Activated CD8-positive, alpha-beta T cell treated with anti-CD3 and anti-CD28 coated beads for 36 hours (primary cell): ENCODE measurements at regions of chr20 and their contacts with region 1.

Region 1: DNA sequence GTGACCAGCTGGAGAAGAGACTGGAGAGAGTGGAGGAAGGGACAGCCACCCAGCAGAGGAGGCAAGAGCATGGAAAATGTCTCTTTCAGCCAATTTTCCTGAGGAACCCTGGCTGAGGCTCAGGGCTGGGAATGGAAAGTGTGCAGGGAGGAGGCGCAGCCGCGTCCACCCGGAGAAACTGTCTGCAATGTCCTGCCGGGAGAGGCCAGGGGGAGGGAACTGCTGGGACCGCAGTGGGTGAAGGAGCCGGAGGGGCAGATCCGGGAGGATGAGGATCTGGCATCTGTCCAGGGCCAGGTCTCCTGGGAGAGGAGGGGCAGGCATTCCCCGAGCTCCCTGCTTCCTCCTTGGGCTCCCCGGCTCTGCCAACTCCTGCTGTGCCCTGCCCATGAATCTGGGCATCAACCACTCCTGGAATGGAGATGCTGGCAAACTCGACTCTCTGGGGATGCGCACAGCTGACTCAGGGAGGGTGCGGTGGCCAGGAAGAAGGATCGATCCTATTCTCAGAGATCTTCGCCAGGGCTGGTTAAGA is 17.4 kb upstream of the HM13 start:
- DNase-seq: no peak
- ATAC-seq: no peak
- H3K4me3 Mint-ChIP-seq: no peak overlapping the region
- H3K27ac Mint-ChIP-seq: no peak overlapping the region
- H3K4me1 Mint-ChIP-seq: no peaks in the 10 kb centered on the region
- H3K27me3 Mint-ChIP-seq: peaks cover 14% of the 10 kb centered on the region
- CTCF ChIP-seq: no peak

Region 2: GRCh38 chr20:31414380-31414779 is 82.4 kb before region 1 on chr20:
- CTCF ChIA-PET with region 1: interaction called, 30 read pairs
- POLR2A ChIA-PET with region 1: no interaction called
- intact Hi-C with region 1: no loop called
- DNase-seq: no peak
- ATAC-seq: no peak
- H3K4me3 Mint-ChIP-seq: no peak overlapping the region
- H3K27ac Mint-ChIP-seq: no peak overlapping the region
- H3K4me1 Mint-ChIP-seq: no peaks in the 10 kb centered on the region
- H3K27me3 Mint-ChIP-seq: peaks cover 4% of the 10 kb centered on the region
- CTCF ChIP-seq: no peak

Region 3: GRCh38 chr20:31440012-31441002 is 56.5 kb before region 1 on chr20 and contains the start of gene DEFB123:
- CTCF ChIA-PET with region 1: interaction called, 24 read pairs
- POLR2A ChIA-PET with region 1: no interaction called
- intact Hi-C with region 1: no loop called
- DNase-seq: peak; percentile 15
- ATAC-seq: no peak
- H3K4me3 Mint-ChIP-seq: no peak within 1 kb of the TSS
- H3K27ac Mint-ChIP-seq: no peak within 1 kb of the TSS
- H3K4me1 Mint-ChIP-seq: no peaks in the 10 kb centered on the region
- H3K27me3 Mint-ChIP-seq: no peaks in the 10 kb centered on the region
- CTCF ChIP-seq: peak; percentile 51
- total RNA-seq, gene DEFB123: not detected

Region 4: DNA sequence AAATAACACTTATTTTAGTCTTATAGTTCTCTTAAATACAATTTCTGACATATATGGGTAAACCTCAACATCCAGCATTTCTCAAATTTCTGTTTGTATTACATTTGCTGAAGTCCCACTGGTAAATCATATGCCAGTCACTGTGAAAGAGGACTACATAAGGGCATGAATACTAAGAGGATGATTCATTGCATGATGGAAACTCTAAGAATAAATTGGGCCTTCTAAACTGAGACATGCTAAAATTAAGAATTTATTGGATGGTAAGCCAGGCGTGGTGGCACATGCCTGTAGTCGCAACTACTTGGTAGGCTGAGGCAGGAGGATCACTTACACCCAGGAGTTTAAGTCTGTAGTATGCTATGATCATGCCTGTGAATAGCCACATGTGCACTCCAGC is 44.3 kb before region 1 on chr20:
- CTCF ChIA-PET with region 1: interaction called, 129 read pairs
- POLR2A ChIA-PET with region 1: no interaction called
- intact Hi-C with region 1: no loop called
- DNase-seq: no peak
- ATAC-seq: no peak
- H3K4me3 Mint-ChIP-seq: no peak overlapping the region
- H3K27ac Mint-ChIP-seq: no peak overlapping the region
- H3K4me1 Mint-ChIP-seq: no peaks in the 10 kb centered on the region
- H3K27me3 Mint-ChIP-seq: peaks cover 8% of the 10 kb centered on the region
- CTCF ChIP-seq: no peak

Region 5: GRCh38 chr20:31485450-31486339 is 11.1 kb before region 1 on chr20:
- CTCF ChIA-PET with region 1: interaction called, 57 read pairs
- POLR2A ChIA-PET with region 1: no interaction called
- intact Hi-C with region 1: no loop called
- DNase-seq: peak; percentile 15
- ATAC-seq: peak; percentile 24
- H3K4me3 Mint-ChIP-seq: no peak overlapping the region
- H3K27ac Mint-ChIP-seq: no peak overlapping the region
- H3K4me1 Mint-ChIP-seq: peaks cover 19% of the 10 kb centered on the region
- H3K27me3 Mint-ChIP-seq: peaks cover 30% of the 10 kb centered on the region
- CTCF ChIP-seq: no peak

Region 6: DNA sequence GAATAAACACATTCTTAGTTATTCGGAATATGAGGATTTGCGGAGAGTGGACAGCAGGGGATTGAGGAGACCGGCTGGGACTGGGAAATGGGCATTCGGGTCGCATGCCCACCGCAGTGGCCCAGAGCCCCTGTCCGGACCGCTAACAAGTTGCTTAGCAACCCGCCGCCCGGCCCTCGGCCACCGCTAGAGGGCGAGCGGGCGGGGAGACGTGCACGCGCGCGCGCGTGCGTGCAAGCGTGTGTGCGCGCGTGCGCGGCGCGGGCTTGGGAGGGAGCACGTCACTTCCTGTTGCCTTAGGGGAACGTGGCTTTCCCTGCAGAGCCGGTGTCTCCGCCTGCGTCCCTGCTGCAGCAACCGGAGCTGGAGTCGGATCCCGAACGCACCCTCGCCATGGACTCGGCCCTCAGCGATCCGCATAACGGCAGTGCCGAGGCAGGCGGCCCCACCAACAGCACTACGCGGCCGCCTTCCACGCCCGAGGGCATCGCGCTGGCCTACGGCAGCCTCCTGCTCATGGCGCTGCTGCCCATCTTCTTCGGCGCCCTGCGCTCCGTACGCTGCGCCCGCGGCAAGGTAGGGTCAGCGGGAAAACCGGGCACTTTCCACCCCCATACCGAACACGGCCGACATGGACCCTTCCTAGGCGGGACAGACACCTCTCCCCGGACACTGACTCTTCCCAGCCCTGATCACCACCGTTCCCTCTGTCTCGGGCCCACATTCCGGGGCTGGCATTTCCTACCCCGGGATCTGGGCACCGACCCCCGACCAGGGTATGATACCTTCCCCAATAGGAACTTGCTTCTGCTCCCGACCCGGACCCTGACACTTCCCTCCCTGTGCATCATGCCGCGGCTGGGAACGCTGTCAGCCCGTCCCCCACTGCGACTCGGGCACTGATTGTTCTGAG is 17.6 kb after region 1 on chr20 and contains the start of gene HM13:
- CTCF ChIA-PET with region 1: interaction called, 30 read pairs
- POLR2A ChIA-PET with region 1: no interaction called
- intact Hi-C with region 1: no loop called
- DNase-seq: peak; percentile 90
- ATAC-seq: peak; percentile 82
- H3K4me3 Mint-ChIP-seq: no peak within 1 kb of the TSS
- H3K27ac Mint-ChIP-seq: no peak within 1 kb of the TSS
- H3K4me1 Mint-ChIP-seq: peaks cover 10% of the 10 kb centered on the region
- H3K27me3 Mint-ChIP-seq: no peaks in the 10 kb centered on the region
- CTCF ChIP-seq: peak; percentile 98
- total RNA-seq, gene HM13: 91.6 to 95.5 TPM

Region 7: DNA sequence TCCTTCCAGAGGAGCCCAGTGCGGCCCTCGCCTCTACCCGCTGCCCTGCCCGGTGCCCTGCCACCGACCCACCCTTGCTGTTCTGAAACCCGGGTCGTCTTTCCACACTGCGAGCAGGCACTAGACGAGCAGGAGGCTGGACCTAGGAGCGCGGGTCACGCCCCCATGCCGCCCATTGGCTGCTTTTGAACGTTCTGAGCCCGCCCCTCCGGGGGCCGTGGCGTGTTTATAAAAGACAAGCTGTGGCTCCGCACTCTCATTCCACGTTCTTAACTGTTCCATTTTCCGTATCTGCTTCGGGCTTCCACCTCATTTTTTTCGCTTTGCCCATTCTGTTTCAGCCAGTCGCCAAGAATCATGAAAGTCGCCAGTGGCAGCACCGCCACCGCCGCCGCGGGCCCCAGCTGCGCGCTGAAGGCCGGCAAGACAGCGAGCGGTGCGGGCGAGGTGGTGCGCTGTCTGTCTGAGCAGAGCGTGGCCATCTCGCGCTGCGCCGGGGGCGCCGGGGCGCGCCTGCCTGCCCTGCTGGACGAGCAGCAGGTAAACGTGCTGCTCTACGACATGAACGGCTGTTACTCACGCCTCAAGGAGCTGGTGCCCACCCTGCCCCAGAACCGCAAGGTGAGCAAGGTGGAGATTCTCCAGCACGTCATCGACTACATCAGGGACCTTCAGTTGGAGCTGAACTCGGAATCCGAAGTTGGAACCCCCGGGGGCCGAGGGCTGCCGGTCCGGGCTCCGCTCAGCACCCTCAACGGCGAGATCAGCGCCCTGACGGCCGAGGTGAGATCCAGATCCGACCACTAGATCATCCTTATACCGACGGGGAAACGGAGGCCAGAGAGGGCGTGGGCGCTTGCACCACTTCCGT is 108.4 kb after region 1 on chr20 and contains the start of gene ID1:
- CTCF ChIA-PET with region 1: no interaction called
- POLR2A ChIA-PET with region 1: no interaction called
- intact Hi-C with region 1: no loop called
- DNase-seq: peak; percentile 93
- ATAC-seq: peak; percentile 86
- H3K4me3 Mint-ChIP-seq: peak within 1 kb of the TSS; percentile 78
- H3K27ac Mint-ChIP-seq: no peak within 1 kb of the TSS
- H3K4me1 Mint-ChIP-seq: peaks cover 22% of the 10 kb centered on the region
- H3K27me3 Mint-ChIP-seq: peaks cover 49% of the 10 kb centered on the region
- CTCF ChIP-seq: no peak
- total RNA-seq, gene ID1: 0.41 to 0.54 TPM